Pancreas (tissue), 10 donors: ENCODE measurements at regions of chr22 and their contacts with region 1.

Region 1: GRCh38 chr22:17084554-17085276 is at the start of gene IL17RA:
- DNase-seq: peak; percentile 94 to 97 (median 96)
- ATAC-seq: peak; percentile 99
- H3K4me3 ChIP-seq: peak within 1 kb of the TSS; percentile 93 to 99 (median 98)
- H3K27ac ChIP-seq: peak within 1 kb of the TSS; percentile 67 to 91 (median 80)
- H3K4me1 ChIP-seq: peaks cover 0 to 4% (median 0%) of the 10 kb centered on the region in 3 donors
- H3K27me3 ChIP-seq: no peaks in the 10 kb centered on the region
- CTCF ChIP-seq: no peak
- total RNA-seq, gene IL17RA: 6.8 to 17.0 (median 8.5) TPM

Region 2: GRCh38 chr22:16789860-16790493 is 294.7 kb before region 1 on chr22:
- intact Hi-C with region 1: no loop called
- DNase-seq: no peak
- ATAC-seq: no peak
- H3K4me3 ChIP-seq: no peak overlapping the region
- H3K27ac ChIP-seq: no peak overlapping the region
- H3K4me1 ChIP-seq: no peaks in the 10 kb centered on the region
- H3K27me3 ChIP-seq: peaks cover 0 to 4% (median 0%) of the 10 kb centered on the region in 4 donors
- CTCF ChIP-seq: no peak

Region 3: GRCh38 chr22:17164392-17165024 is 79.8 kb after region 1 on chr22:
- intact Hi-C with region 1: loop called in 1 of 3 experiments (anchors 10 kb)
- DNase-seq: no peak
- ATAC-seq: no peak
- H3K4me3 ChIP-seq: no peak overlapping the region
- H3K27ac ChIP-seq: no peak overlapping the region
- H3K4me1 ChIP-seq: peaks cover 0 to 6% (median 0%) of the 10 kb centered on the region in 3 donors
- H3K27me3 ChIP-seq: no peaks in the 10 kb centered on the region
- CTCF ChIP-seq: no peak

Region 4: GRCh38 chr22:17501679-17502285 is 417.1 kb after region 1 on chr22:
- intact Hi-C with region 1: loop called in 2 of 3 experiments (anchors 5 to 10 kb)
- DNase-seq: peak in 2 of 6 donors; percentile 4 to 30
- ATAC-seq: peak; percentile 91 to 97 (median 95)
- H3K4me3 ChIP-seq: no peak overlapping the region
- H3K27ac ChIP-seq: no peak overlapping the region
- H3K4me1 ChIP-seq: no peaks in the 10 kb centered on the region
- H3K27me3 ChIP-seq: no peaks in the 10 kb centered on the region
- CTCF ChIP-seq: peak in 3 of 4 donors; percentile 28 to 60 (median 49)